ENCODE measurements at regions of chr5 and their contacts with region 1.

Region 1: DNA sequence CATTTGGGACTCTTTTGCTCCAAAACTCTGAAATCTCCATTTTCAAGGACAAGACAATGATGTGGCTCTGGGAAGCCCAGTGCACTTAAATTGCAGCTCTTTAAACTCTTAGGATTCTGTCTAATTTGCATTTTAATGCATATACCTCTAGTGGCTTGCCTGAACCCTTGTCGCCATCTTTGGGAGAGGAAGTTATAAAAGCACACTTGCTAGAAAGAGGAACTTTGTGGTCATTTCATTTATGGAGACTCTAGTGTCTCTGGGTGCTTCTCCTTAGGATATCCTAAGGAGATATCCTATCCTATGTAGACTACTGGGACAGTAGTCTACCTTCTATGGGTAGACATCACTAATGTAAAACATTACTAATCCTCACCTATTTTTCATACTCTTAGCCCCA is 77.3 kb upstream of the SLC1A3 start:
- DNase-seq: no peak
- ATAC-seq: no peak
- H3K4me3 ChIP-seq: no peak overlapping the region
- H3K27ac ChIP-seq: no peak overlapping the region
- H3K4me1 ChIP-seq: no peaks in the 10 kb centered on the region
- H3K27me3 ChIP-seq: no peaks in the 10 kb centered on the region
- CTCF ChIP-seq: no peak

Region 2: DNA sequence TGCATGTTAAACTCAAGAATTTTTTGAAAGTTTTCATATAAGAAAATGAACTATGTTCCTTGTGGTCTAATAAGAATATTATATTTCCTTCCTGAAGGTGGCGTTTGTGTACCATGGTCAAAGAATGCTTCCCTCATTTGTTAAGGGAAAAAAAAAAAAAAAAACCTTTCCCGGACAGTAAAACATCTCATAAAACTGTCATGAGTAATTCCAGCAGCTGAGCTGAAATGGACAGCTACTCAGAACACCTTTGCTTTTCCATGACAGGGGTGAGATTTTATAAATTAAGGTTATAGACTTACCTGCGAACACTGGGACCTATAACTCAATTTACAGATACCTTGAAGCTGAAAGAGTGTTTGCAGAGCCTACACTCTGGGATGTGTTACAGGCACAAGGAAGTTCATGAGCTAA is 114.3 kb before region 1 on chr5:
- CTCF ChIA-PET with region 1: interaction called, 12 read pairs
- POLR2A ChIA-PET with region 1: no interaction called
- in situ Hi-C with region 1: no loop called
- intact Hi-C with region 1: no loop called
- DNase-seq: no peak
- ATAC-seq: 0 out of 2 replicates have a peak, but pooled peaks have one; percentile 58
- H3K4me3 ChIP-seq: no peak overlapping the region
- H3K27ac ChIP-seq: no peak overlapping the region
- H3K4me1 ChIP-seq: no peaks in the 10 kb centered on the region
- H3K27me3 ChIP-seq: peaks cover 2% of the 10 kb centered on the region; the same call in 1 of the 2 replicates
- CTCF ChIP-seq: peak; percentile 55; the same call in 1 of the 2 replicates